Activated naive CD4-positive, alpha-beta T cell treated with anti-CD3 and anti-CD28 coated beads for 36 hours (primary cell): ENCODE measurements at regions of chr19 and their contacts with region 1.

Region 1: DNA sequence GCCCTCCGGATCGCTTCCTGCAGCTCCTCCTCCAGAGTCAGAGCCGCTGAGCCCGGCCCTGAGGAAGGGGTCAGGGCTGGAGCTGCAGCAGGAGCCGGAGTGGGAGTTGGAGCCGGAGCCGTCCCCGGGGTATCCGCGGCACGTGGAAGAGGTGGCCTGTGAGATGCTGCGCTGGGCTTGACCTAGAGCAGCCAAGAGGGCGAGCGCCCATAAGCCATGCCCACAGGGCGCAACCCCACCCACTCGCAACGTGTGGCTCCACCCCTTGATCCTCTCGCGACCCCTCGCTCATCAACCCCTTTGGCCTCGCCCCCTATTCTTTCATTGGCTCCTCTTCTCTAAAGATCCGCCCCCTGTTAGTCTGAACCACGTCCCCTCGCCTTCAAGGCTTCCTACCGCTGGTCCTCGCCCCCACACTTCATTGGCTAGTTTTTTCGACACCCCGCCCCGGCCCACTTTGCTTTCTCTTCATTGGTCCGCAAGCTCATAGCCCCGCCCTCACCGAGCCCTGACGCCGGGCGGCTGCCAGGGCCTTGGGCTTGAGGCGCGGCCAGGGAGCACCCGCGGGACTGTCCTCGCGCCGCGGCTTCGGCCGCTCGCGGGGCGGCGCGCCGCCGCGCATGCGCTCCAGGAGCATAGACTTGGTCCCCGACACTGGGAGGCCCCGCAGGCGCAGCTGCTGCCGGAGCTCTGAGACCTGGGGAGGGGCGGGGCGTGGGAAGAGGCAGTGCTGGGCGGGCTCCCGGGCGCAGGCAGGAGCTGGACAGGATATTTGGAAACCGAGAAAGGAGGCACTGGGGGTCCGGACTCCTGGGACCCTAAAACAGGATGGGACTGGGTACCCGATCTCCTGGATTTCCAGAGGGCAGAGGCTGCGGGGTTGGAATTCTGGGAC is 5.4 kb downstream of the MAMSTR start:
- DNase-seq: peak; percentile 99
- H3K4me3 Mint-ChIP-seq: peak overlapping the region; percentile 86
- H3K27ac Mint-ChIP-seq: peak overlapping the region; percentile 58
- H3K4me1 Mint-ChIP-seq: peaks cover 11% of the 10 kb centered on the region
- H3K27me3 Mint-ChIP-seq: no peaks in the 10 kb centered on the region

Region 2: DNA sequence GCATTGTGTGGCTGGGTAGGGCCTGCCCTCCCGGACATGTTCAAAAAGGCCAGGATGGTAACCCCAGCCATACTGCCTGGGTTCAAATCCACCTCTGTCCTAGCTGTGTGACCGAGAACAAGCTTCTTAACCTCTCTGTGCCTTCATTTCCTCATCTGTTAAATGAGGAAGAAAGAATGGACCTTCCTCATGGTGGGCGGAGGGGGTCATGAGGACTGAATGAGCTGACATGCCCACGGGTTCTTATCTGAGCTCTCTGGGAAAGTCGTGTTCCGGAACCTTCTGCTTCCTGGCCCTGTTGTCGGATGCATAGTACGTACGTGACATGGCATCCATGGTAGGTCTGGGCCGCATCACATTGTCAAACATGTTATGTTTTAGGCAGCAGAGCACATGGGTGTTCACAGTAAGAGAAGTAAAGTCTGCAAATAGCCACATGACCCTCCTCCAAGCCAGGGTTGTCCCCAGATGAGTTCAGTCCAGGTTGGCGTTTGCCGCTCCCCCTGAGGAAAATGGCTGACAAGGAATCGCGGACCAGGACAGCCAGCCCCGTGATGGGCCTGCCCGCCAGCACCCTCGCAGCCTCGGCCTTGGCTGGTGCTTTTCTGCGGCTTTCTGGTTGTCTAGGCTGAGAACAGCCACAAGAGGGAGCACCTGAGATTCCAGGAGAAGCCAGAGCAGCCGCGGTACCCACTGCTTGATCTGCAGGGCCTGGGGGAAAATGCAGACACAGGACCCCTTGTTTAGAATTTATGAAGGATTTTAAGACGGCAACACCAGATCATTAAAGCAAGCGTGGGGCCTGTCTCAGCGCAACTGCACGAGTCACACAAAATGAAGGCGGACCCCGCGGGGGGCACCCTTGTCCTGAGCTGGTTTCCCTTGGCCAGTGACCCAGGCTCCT is 38.9 kb before region 1 on chr19:
- CTCF ChIA-PET with region 1: interaction called, 13 read pairs
- intact Hi-C with region 1: no loop called
- DNase-seq: peak; percentile 86
- H3K4me3 Mint-ChIP-seq: no peak overlapping the region
- H3K27ac Mint-ChIP-seq: no peak overlapping the region
- H3K4me1 Mint-ChIP-seq: peaks cover 5% of the 10 kb centered on the region
- H3K27me3 Mint-ChIP-seq: no peaks in the 10 kb centered on the region